Activated T-helper 1 cell treated with anti-CD3 and anti-CD28 coated beads, Interleukin-12 subunit alpha, Interleukin-12 subunit beta, Interleukin-2, Interleukin-4 antibody, amounts not matched to agents 30 ng/mL and 10 ng/mL and 1 ng/mL, durations not matched to agents 14 hours and 24 hours and 36 hours (primary cell): ENCODE measurements at regions of chr3 and their contacts with region 1.

Region 1: DNA sequence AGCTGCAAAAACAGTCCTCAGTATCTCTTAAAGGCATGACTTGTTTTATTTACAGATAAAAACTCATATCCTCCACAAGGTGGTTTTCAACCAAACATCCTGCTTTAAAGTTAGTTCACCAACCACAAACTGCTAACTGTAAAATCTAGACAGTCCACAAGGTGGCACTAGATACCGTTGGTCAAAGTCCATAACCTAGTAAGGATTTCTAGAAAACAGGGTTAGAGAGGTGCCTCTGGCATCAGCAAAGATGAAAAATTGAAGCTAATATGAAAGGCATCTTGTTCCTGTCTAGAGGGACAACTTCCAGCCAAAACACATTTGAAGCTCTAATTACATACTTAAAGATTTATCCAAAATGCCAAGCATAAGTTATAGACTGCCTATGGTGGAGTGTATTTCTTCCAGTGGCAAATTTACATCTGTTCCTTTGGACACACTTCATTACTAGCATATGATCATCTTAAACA is 56.0 kb downstream of the ZMAT3 start:
- DNase-seq: peak; percentile 68
- H3K4me3 Mint-ChIP-seq: no peak overlapping the region
- H3K27ac Mint-ChIP-seq: peak overlapping the region; percentile 24
- H3K4me1 Mint-ChIP-seq: peaks cover 55% of the 10 kb centered on the region
- H3K27me3 Mint-ChIP-seq: peaks cover 7% of the 10 kb centered on the region

Region 2: GRCh38 chr3:178436773-178437172 is 578.8 kb before region 1 on chr3:
- intact Hi-C with region 1: loop called (anchors 5 kb)
- DNase-seq: no peak
- H3K4me3 Mint-ChIP-seq: no peak overlapping the region
- H3K27ac Mint-ChIP-seq: no peak overlapping the region
- H3K4me1 Mint-ChIP-seq: no peaks in the 10 kb centered on the region
- H3K27me3 Mint-ChIP-seq: no peaks in the 10 kb centered on the region

Region 3: GRCh38 chr3:179037351-179037750 is 21.8 kb after region 1 on chr3:
- intact Hi-C with region 1: loop called (anchors 2 kb)
- DNase-seq: peak; percentile 51
- H3K4me3 Mint-ChIP-seq: peak overlapping the region; percentile 69
- H3K27ac Mint-ChIP-seq: peak overlapping the region; percentile 79
- H3K4me1 Mint-ChIP-seq: peaks cover 15% of the 10 kb centered on the region
- H3K27me3 Mint-ChIP-seq: no peaks in the 10 kb centered on the region

Region 4: GRCh38 chr3:179260949-179261765 is 245.6 kb after region 1 on chr3:
- intact Hi-C with region 1: loop called (anchors 5 kb)
- DNase-seq: peak; percentile 66
- H3K4me3 Mint-ChIP-seq: peak overlapping the region; percentile 76
- H3K27ac Mint-ChIP-seq: no peak overlapping the region
- H3K4me1 Mint-ChIP-seq: peaks cover 13% of the 10 kb centered on the region
- H3K27me3 Mint-ChIP-seq: peaks cover 22% of the 10 kb centered on the region

Region 5: GRCh38 chr3:179451265-179452175 is 435.9 kb after region 1 on chr3 and contains the start of gene GNB4:
- intact Hi-C with region 1: loop called (anchors 2 kb)
- DNase-seq: peak; percentile 58
- H3K4me3 Mint-ChIP-seq: peak within 1 kb of the TSS; percentile 89
- H3K27ac Mint-ChIP-seq: peak within 1 kb of the TSS; percentile 91
- H3K4me1 Mint-ChIP-seq: peaks cover 39% of the 10 kb centered on the region
- H3K27me3 Mint-ChIP-seq: peaks cover 51% of the 10 kb centered on the region
- total RNA-seq, gene GNB4: 13.9 and 15.4 TPM in 2 replicates

Region 6: DNA sequence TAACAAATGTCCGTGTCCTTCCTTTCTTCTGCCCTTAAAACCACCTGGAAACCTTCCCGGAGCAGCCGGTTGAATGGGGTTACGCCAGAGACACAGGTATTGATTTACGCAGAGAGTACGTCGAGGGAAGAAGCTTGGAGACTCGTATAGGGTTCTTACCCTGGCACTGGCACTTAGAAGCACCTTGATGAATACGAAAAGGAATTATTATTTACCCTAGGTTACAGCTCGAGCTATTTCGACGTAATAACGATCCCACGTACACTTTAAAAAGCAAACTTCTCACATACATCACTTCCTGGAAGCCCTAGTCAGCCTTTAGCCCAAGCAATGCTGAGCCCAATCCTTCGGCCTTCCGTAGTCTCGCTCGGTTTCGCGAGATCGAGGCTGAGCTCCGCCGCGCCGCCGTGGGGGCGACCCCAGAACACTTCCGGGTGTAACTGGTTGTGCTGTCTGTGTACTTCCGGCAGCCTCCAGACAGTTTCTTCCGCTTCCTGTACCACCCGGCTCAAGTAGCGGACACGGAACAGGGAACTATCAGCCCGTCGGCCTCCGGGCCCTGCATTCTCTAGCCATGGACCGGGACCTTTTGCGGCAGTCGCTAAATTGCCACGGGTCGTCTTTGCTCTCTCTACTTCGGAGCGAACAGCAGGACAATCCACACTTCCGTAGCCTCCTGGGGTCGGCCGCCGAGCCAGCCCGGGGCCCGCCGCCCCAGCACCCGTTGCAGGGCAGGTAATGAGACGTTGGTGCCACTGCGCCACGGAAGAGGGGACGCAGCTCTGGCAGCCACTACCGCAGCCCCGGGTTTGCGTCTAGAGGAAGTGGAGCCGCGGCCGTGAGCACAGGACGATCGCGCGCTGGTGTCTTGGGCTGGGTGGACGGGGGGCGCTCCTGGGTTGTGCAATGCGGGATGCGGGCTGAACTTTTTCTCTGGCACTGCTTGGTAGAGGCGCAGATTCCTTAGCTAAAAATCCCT is 1586.4 kb after region 1 on chr3 and contains the start of gene TTC14:
- intact Hi-C with region 1: loop called (anchors 10 kb)
- DNase-seq: peak; percentile 92
- H3K4me3 Mint-ChIP-seq: peak within 1 kb of the TSS; percentile 91
- H3K27ac Mint-ChIP-seq: peak within 1 kb of the TSS; percentile 95
- H3K4me1 Mint-ChIP-seq: peaks cover 23% of the 10 kb centered on the region
- H3K27me3 Mint-ChIP-seq: peaks cover 20% of the 10 kb centered on the region
- total RNA-seq, gene TTC14: 43.9 and 50.0 TPM in 2 replicates